ENCODE measurements at regions of chr21 and their contacts with region 1.

Region 1: GRCh38 chr21:37366482-37367316 is at the start of gene DYRK1A:
- DNase-seq: peak; percentile 99 to 100 (median 100)
- H3K4me3 ChIP-seq: peak within 1 kb of the TSS; percentile 71 to 94 (median 92)
- H3K27ac ChIP-seq: peak within 1 kb of the TSS; percentile 99 to 100
- H3K4me1 ChIP-seq: peaks cover 5 to 16% (median 6%) of the 10 kb centered on the region in 3 donors
- H3K27me3 ChIP-seq: no peaks in the 10 kb centered on the region
- CTCF ChIP-seq: no peak
- total RNA-seq, gene DYRK1A: 78.0 TPM

Region 2: GRCh38 chr21:37273911-37274690 is 92.6 kb before region 1 on chr21:
- intact Hi-C with region 1: loop called (anchors 10 kb)
- DNase-seq: no peak
- H3K4me3 ChIP-seq: no peak overlapping the region
- H3K27ac ChIP-seq: no peak overlapping the region
- H3K4me1 ChIP-seq: no peaks in the 10 kb centered on the region
- H3K27me3 ChIP-seq: no peaks in the 10 kb centered on the region
- CTCF ChIP-seq: no peak